ENCODE measurements at regions of chr17 and their contacts with region 1.

Region 1: GRCh38 chr17:7296189-7296902 is 1.9 kb upstream of the YBX2 start:
- DNase-seq: peak; percentile 93
- H3K4me3 Mint-ChIP-seq: peak overlapping the region; percentile 77
- H3K27ac Mint-ChIP-seq: no peak overlapping the region
- H3K4me1 Mint-ChIP-seq: peaks cover 15% of the 10 kb centered on the region
- H3K27me3 Mint-ChIP-seq: peaks cover 45% of the 10 kb centered on the region

Region 2: DNA sequence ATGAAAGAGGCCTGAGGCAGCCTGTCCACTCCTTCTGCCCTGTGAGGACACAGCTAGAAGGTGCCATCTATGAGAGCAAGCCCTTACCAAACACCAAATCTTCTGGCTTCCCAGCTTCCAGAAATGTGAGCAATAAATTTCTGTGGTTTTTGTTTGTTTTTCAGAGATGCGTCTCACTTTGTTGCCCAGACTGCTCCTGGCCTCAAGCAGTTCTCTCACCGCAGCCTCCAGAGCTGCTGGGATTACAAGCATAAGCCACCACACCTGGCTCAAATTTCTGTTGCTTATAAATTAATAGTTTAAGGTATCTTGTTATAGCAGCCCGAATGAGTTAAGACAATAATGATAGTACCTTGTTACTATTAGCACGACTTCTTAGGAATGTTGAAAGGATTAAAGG is 240.0 kb before region 1 on chr17:
- intact Hi-C with region 1: loop called (anchors 1 kb)
- DNase-seq: no peak
- H3K4me3 Mint-ChIP-seq: no peak overlapping the region
- H3K27ac Mint-ChIP-seq: no peak overlapping the region
- H3K4me1 Mint-ChIP-seq: peaks cover 15% of the 10 kb centered on the region
- H3K27me3 Mint-ChIP-seq: peaks cover 5% of the 10 kb centered on the region

Region 3: GRCh38 chr17:7219812-7220581 is 76.3 kb before region 1 on chr17 and contains the starts of genes ACADVL and DLG4:
- intact Hi-C with region 1: loop called (anchors 2 kb)
- DNase-seq: peak; percentile 93
- H3K4me3 Mint-ChIP-seq: peak within 1 kb of the TSS; percentile 98
- H3K27ac Mint-ChIP-seq: peak within 1 kb of the TSS; percentile 97
- H3K4me1 Mint-ChIP-seq: peaks cover 50% of the 10 kb centered on the region
- H3K27me3 Mint-ChIP-seq: no peaks in the 10 kb centered on the region
- total RNA-seq, gene ACADVL: 244 and 267 TPM in 2 replicates
- total RNA-seq, gene DLG4: 12.4 and 14.0 TPM in 2 replicates

Region 4: DNA sequence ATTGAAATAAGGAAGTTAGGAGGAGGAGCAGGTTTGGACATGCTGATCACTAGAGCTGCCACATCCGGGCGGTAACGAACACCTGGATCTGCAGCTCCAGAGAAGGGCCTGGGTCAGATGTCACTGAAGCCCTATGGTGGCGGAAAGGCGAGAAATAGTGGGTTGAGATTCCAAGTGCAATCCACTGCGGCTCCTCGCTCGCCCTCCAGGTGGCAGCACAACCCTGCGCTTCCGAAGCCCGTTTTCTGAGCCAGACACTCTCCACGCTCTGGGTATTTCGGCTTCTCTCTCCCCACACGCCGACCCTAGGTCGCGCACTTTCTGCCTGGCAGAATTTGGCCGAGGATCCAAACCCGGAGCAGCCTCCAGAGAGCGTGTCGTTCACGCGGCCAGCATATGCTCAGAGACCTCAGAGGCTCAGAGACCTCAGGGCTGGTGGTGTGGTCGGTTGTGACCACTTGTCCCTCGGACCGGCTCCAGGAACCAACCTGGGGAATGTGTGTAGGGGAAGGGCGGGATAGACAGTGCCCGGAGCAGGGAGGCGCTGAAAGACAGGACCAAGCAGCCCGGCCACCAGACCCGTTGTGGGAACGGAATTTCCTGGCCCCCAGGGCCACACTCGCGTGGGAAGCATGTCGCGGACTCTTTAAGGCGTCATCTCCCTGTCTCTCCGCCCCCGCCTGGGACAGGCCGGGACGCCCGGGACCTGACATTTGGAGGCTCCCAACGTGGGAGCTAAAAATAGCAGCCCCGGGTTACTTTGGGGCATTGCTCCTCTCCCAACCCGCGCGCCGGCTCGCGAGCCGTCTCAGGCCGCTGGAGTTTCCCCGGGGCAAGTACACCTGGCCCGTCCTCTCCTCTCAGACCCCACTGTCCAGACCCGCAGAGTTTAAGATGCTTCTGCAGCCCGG is 15.6 kb before region 1 on chr17:
- intact Hi-C with region 1: loop called (anchors 1 kb)
- DNase-seq: peak; percentile 93
- H3K4me3 Mint-ChIP-seq: peak overlapping the region; percentile 84
- H3K27ac Mint-ChIP-seq: peak overlapping the region; percentile 76
- H3K4me1 Mint-ChIP-seq: peaks cover 10% of the 10 kb centered on the region
- H3K27me3 Mint-ChIP-seq: peaks cover 32% of the 10 kb centered on the region

Region 5: GRCh38 chr17:7583253-7584109 is 287.1 kb after region 1 on chr17 and contains the start of gene MPDU1:
- intact Hi-C with region 1: no loop called
- DNase-seq: peak; percentile 99
- H3K4me3 Mint-ChIP-seq: peak within 1 kb of the TSS; percentile 89
- H3K27ac Mint-ChIP-seq: peak within 1 kb of the TSS; percentile 99
- H3K4me1 Mint-ChIP-seq: peaks cover 46% of the 10 kb centered on the region
- H3K27me3 Mint-ChIP-seq: no peaks in the 10 kb centered on the region
- total RNA-seq, gene MPDU1: 92.5 and 104 TPM in 2 replicates